HCT116 (cell line): ENCODE measurements at regions of chr6 and their contacts with region 1.

Region 1: DNA sequence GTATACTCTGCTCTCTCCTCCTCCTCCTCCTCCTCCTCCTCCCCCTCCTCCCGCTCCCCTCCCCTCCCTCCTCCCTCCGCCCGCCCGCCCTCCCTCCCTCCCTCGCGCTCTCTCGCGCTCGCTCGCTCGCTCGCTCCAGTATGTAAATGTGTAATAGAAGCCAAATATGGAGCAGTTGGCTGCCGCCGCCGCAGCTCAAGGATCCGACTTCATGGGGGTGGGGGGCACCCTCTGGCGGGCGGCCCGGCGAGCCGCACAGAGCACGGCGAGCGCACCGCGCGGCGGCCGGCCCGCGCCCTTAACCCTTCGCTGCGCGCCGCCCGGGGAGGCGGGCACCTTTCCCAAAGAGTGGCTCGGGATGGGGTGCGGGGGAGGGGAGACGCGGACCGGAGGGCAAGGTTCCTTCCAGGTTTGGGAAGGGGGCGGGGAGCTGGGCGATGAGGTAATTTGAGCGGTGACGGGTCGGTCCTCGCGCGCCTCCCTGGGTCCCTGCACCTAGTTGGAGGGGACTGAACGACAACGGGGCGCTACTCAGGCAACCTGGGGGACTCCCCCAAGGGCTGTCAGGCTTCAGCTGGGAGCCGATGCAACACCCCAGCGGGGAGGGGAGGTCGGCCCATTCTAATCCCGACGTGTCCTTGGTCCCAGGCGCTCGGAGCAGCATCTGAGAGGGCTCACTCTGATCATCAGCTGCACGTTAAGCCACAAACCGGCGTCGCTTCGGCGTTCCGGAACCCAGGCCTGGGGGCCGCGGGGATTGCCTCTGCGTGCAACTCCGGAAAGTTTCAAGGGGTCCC is 409 bp upstream of the ATXN1 start:
- DNase-seq: peak; percentile 74
- ATAC-seq: peak; percentile 55
- H3K4me3 ChIP-seq: peak overlapping the region; percentile 56 to 89
- H3K27ac ChIP-seq: peak overlapping the region; percentile 81
- H3K4me1 ChIP-seq: peaks cover 38 to 62% of the 10 kb centered on the region in 2 experiments
- H3K27me3 ChIP-seq: no peaks in the 10 kb centered on the region
- CTCF ChIP-seq: 0 out of 6 replicates have a peak, but pooled peaks of 1 of the 3 experiments have one; percentile 12
- POLR2A ChIP-seq: no peak
- RAD21 ChIP-seq: no peak; the same call in 1 of the 2 replicates

Region 2: DNA sequence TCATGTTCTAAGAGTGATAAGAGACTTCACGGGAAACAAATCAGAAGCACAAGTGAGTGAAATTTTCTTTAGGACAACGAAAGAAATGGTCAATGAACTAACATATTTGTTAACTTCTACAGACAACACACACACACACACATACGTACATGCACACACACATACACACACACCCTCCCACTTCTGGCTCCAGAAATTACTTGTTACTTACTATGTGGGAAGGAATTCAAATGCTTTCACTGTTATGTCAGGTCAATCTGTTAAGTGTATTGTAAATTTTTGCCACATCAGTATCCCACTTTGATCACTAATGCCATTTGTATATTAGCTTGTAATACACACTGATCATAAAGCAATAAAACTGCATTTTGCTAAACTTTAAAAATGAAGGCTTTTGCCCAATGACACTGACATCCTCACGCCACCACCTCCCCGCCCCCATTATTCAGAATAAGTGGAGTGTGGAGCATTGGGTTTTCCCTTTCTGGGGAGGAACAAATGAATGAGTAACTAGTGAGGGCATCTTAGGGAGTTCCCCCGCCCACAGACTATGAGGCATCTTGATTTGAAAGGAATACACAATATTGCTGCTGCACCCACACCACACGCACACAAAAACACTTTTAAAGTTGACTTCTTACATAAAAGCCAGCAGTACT is 76.6 kb before region 1 on chr6:
- CTCF ChIA-PET with region 1: interaction called, 3 read pairs
- POLR2A ChIA-PET with region 1: interaction called, 5 read pairs
- RAD21 ChIA-PET with region 1: no interaction called
- intact Hi-C with region 1: loop called (anchors 5 kb)
- DNase-seq: peak; percentile 24
- ATAC-seq: no peak
- H3K4me3 ChIP-seq: no peak overlapping the region
- H3K27ac ChIP-seq: no peak overlapping the region
- H3K4me1 ChIP-seq: peaks cover 52 to 62% of the 10 kb centered on the region in 2 experiments
- H3K27me3 ChIP-seq: no peaks in the 10 kb centered on the region
- CTCF ChIP-seq: no peak
- POLR2A ChIP-seq: no peak
- RAD21 ChIP-seq: no peak

Region 3: GRCh38 chr6:16723826-16724225 is 37.8 kb before region 1 on chr6:
- CTCF ChIA-PET with region 1: interaction called, 13 read pairs
- POLR2A ChIA-PET with region 1: interaction called, 11 read pairs
- RAD21 ChIA-PET with region 1: interaction called, 3 to 4 read pairs
- intact Hi-C with region 1: loop called (anchors 2 kb)
- DNase-seq: peak; percentile 84
- ATAC-seq: peak; percentile 73
- H3K4me3 ChIP-seq: no peak overlapping the region
- H3K27ac ChIP-seq: peak overlapping the region; percentile 4; the same call in 1 of the 2 replicates
- H3K4me1 ChIP-seq: peaks cover 72 to 79% of the 10 kb centered on the region in 2 experiments
- H3K27me3 ChIP-seq: no peaks in the 10 kb centered on the region
- CTCF ChIP-seq: no peak
- POLR2A ChIP-seq: no peak
- RAD21 ChIP-seq: no peak

Region 4: DNA sequence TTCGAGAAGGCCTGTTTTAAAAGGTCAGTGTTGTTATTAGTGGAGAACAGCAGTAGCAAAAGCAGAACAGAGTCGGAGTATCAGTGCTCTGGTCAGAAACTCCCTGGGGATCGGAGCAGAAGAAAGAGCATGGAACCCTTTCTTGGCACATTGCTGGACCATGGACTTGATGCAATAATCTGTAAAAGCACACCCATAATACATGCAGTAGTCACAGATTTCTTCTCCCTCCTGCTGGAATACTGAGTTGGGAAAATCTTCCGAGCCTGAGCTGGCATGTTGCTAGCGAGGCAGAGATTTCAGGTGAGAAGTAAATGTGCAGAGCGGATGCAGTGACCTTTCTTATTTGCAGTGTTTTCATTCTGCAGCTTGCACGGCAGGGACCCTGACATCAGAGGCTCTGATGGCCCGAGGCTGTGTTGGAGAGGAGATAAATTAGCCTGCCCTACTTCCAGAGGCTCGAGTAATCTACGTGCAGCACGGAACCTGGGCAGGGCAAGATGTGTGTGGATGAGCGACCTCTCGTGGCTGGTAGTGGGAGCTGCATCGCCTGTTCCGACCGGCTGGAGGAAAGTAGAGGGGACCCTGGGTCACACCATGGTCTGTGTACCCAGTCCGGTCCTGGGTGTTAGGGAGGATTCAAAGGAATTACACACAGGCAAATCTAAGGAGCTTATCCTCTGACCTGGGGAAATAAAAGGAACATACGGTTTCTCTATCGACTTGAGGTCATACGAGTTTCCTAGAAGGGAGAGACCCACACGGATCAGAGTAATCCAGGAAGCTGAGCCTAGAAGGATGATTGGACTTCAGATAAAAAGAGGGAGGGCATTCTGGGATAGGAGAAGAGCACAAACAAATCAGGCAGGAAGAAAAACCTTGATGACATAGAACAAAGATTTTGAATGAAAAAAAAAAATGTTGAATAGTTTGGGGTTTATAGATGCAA is 203.2 kb after region 1 on chr6:
- CTCF ChIA-PET with region 1: interaction called, 19 read pairs
- POLR2A ChIA-PET with region 1: no interaction called
- RAD21 ChIA-PET with region 1: interaction called in 1 of 2 experiments, 5 read pairs
- intact Hi-C with region 1: loop called (anchors 1 kb)
- DNase-seq: peak; percentile 39
- ATAC-seq: peak; percentile 99
- H3K4me3 ChIP-seq: no peak overlapping the region; a peak in 1 of 4 replicates
- H3K27ac ChIP-seq: no peak overlapping the region
- H3K4me1 ChIP-seq: peaks cover 2 to 8% of the 10 kb centered on the region in 2 experiments; a peak in 3 of 4 replicates
- H3K27me3 ChIP-seq: peaks cover 2% of the 10 kb centered on the region; the same call in 1 of the 2 replicates
- CTCF ChIP-seq: peak; percentile 72 to 97 (median 96); a peak in 5 of 6 replicates
- POLR2A ChIP-seq: no peak
- RAD21 ChIP-seq: peak; percentile 90